Common myeloid progenitor, CD34-positive (primary cell): ENCODE measurements at regions of chr17 and their contacts with region 1.

Region 1: DNA sequence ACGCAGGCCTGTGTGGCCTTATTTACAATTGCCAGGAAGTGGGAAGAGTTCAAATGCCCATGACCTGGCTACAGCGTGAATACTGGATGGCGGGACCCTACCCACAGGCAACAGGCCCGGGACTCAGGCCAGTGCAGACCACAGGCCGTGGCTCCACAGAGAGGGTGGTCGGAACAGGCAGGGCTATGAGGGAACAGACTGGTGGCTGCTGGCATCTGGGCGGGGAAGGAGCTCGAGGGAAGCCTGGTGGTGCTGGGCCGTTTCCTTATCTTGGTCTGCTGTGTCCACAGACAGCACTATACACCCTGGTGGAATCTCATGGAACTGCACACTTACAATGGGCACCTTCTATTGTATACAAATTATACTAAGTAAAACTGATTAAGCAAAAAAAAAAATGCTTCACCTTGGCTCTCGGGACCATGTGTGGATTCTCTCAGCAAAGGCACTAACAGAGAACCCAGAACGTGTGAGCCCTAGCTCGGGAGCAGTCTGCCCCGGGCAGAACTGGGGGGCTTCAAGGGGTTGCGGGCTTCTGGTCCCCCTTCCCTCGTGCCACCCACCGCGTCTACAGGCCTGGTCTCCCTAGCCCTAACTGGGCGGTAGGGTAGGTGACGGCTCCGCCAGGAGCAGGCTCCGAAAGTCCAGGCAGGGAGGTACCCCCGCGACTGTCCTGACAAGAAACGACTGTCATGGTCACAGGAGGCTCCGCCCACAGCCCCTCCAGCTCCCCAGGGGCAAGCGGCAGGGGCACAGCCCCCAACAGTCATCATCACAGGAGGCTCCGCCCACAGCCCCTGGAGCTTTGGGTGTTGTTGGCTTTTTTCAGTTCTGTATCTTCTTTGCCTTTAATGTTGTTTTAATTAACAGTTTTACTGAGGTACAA is 21.8 kb downstream of the CEP131 start:
- DNase-seq: peak; percentile 84 to 94 (median 91)
- H3K4me3 ChIP-seq: no peak overlapping the region
- H3K27ac ChIP-seq: peak overlapping the region in 1 of 2 experiments; percentile 16
- H3K4me1 ChIP-seq: peaks cover 0 to 12% (median 4%) of the 10 kb centered on the region in 4 experiments
- H3K27me3 ChIP-seq: no peaks in the 10 kb centered on the region

Region 2: GRCh38 chr17:81153340-81153803 is 47.6 kb before region 1 on chr17:
- CTCF ChIA-PET with region 1: interaction called, 11 read pairs
- POLR2A ChIA-PET with region 1: no interaction called
- DNase-seq: no peak
- H3K4me3 ChIP-seq: no peak overlapping the region
- H3K27ac ChIP-seq: no peak overlapping the region
- H3K4me1 ChIP-seq: peaks cover 0 to 19% (median 17%) of the 10 kb centered on the region in 4 experiments
- H3K27me3 ChIP-seq: no peaks in the 10 kb centered on the region